Right ventricle myocardium superior (tissue), 1 donor: ENCODE measurements at regions of chr6 and their contacts with region 1.

Region 1: DNA sequence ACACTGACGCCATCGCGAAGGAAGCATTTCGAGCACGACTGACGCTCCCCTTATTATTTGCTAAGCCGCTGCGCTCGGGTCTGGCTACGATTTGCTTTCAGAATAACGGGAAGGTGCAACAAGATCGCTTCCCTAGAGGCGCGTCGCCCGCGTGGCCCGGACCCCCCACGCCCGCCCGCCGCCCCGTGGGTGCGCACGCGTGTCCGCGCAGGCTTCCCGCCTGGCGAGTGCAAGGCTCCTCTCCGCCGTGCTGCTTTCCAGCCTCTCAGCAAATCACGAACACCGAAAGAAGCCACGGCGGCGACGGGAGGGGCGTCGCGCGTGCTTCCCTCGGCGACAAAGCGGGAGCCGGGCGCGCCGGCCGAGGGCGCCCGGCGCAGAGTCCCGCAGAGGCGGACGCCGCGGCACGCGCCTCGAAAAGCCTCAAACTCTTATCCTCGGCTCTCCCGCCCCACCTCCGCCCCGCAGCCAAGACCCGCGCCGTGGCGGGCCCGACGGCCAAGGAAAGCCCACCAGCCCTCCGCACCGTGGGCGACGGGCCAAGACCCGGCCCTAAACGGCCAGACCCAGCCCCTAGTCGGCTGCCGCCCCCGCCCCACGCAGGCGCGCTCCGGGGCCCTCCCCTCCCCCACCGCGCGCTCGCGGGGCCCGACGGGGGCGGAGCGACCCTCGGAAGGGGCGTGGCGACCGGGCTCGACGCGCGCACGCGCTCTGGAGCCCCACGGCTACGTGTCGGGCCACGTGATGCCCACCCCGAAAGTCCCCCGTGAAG is 987 bp upstream of the QKI start:
- DNase-seq: peak; percentile 93
- ATAC-seq: peak; percentile 90

Region 2: DNA sequence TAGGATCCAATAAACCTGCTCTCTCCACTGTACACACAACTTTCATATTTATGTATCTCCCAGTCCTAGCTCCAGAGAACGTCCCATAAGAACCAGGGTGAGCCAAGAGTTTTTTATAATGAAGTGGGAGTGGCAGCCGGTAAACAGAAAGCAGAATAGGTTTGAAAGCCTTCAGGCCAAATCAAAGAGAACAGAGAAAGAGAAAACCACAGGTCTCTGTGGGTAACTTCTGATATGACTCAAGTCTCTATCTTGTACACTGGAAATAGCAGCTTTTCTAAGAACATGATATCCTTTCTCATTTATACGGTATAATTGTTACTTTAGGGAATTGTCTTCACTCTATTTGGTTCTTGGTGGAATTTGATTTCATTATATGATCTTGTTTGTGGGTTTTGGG is 412.2 kb before region 1 on chr6:
- intact Hi-C with region 1: no loop called
- DNase-seq: no peak
- ATAC-seq: peak; percentile 34

Region 3: DNA sequence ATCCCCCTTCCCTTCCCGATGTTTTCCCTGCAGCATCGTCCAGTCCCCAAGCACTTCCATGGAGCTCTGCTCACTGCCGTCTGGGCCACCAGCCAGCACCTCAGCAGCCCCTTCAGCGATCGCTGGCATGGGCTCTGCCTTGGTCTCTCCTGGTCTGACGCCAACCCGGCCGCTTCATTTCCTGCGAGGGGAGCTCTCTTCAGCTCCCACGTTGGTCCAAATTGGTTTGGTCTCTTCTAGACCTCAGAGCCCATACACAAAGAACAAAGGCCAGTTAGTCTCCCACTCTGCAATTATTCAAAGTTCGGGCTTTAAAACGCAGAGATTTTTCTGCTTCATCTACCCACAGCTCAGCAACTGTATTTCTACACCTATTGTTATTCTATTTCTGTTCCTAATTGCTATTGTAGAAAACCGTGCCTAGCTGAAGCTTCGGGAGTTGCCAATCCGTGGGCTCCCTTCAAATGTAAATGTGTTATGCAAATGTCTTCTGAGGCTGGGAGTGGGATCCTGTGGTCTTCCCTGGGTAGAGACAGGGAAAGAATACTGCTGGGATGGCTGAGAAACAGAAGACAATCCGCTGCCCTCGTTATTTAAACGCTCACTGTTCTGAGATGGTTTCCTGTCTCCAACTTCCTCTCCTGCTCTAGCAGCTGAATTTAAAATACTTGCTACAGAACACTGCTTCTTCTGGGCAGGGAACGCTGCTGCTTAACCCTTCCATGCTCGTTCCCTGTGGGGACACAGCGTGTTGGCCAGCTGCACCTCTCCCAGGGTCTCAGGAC is 153.2 kb before region 1 on chr6:
- intact Hi-C with region 1: loop called (anchors 10 kb)
- DNase-seq: no peak
- ATAC-seq: peak; percentile 28

Region 4: DNA sequence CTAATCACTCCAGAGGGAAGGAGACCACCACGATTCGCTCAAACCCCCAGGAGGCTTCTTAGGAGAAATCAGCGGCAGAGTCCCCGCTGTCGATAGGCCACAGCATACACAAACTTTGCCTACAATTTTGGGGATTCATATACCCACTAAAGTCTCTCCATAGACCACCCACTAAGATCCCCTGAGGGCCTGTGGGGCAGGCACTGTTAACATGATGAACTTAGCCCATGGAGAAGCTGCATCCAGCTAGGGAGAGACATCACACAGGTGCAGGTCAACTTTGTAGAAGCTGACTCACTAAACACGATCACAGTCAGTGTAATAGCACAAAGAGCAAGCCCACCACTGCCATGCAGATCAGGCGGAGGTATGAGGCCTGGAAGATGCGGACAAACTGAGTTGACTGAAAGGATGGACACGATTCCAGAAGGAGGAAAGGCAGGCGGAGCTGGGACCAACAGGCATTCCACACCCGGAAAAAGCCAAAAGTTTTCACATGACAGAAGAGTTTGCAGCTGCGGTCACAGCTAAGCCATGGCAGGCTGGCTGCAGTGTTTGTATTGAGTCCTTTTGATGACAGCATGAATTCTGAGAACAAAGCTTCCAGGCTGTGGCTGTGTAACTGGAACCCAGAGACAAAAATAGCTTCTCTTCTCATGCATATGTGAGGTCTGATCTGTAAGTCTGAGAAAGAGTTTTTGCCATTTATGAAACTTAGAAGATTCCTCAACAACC is 74.7 kb before region 1 on chr6:
- intact Hi-C with region 1: loop called (anchors 5 kb)
- DNase-seq: no peak
- ATAC-seq: peak; percentile 69

Region 5: DNA sequence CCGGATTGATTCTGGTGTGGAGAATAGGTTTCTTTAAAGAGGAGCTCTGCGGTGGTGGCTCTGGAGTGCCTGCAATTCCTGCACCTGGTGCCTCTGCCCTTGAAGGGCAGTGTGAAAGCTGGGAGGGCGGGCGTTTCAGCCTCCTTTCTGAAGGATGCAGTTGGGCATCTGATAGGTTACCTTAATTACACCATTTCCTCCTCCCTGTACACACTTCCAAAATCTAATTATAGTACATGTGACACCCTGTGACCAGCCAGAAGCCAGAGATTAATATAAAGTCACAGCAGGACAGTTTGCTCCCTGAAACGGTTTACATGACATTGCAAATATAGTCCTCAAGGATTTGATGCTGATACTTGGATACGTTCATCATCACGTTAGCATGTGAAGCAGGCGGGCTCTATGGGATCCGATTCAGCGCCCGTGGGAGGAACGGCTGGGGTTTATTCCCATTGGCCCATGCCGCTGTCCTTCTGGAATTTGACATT is 549.1 kb after region 1 on chr6:
- intact Hi-C with region 1: loop called (anchors 5 kb)
- DNase-seq: peak; percentile 80
- ATAC-seq: peak; percentile 76

Region 6: GRCh38 chr6:164114651-164115050 is 701.1 kb after region 1 on chr6:
- intact Hi-C with region 1: no loop called
- DNase-seq: no peak
- ATAC-seq: no peak